Heart left ventricle (tissue), 16 donors: ENCODE measurements at regions of chr15 and their contacts with region 1.

Region 1: GRCh38 chr15:27401471-27401870 is 430.5 kb downstream of the GABRG3 start:
- DNase-seq: no peak
- ATAC-seq: no peak
- H3K4me3 ChIP-seq: no peak overlapping the region
- H3K27ac ChIP-seq: no peak overlapping the region
- H3K4me1 ChIP-seq: no peaks in the 10 kb centered on the region
- H3K27me3 ChIP-seq: peaks cover 0 to 5% (median 0%) of the 10 kb centered on the region in 9 donors
- CTCF ChIP-seq: no peak
- POLR2A ChIP-seq: no peak

Region 2: DNA sequence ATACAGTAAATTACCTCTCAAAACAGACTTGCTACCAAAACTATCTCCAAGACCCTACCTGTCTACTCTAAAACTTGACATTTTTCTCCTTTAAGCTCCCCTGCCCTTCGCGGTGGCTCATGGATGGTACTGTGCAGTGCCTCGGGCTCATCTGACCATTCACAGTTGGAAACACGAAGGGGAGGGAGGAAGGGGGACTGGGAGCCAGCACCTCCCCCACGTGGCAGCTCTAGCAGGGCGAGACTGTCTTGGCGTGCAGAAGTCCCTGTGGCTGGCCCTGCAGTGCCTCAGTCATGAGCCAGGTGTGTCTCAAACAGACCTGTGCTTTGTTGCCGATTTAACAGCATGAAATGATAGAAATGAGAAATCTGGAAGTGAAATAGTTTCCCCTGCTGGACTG is 58.5 kb before region 1 on chr15:
- intact Hi-C with region 1: no loop called
- DNase-seq: no peak
- ATAC-seq: no peak
- H3K4me3 ChIP-seq: no peak overlapping the region
- H3K27ac ChIP-seq: no peak overlapping the region
- H3K4me1 ChIP-seq: no peaks in the 10 kb centered on the region
- H3K27me3 ChIP-seq: no peaks in the 10 kb centered on the region
- CTCF ChIP-seq: no peak
- POLR2A ChIP-seq: no peak

Region 3: GRCh38 chr15:27463525-27464088 is 62.1 kb after region 1 on chr15:
- intact Hi-C with region 1: loop called in 1 of 10 experiments (anchors 10 kb)
- DNase-seq: no peak
- ATAC-seq: no peak
- H3K4me3 ChIP-seq: no peak overlapping the region
- H3K27ac ChIP-seq: no peak overlapping the region
- H3K4me1 ChIP-seq: no peaks in the 10 kb centered on the region
- H3K27me3 ChIP-seq: no peaks in the 10 kb centered on the region
- CTCF ChIP-seq: no peak
- POLR2A ChIP-seq: no peak